ENCODE measurements at regions of chr6 and their contacts with region 1.

Region 1: DNA sequence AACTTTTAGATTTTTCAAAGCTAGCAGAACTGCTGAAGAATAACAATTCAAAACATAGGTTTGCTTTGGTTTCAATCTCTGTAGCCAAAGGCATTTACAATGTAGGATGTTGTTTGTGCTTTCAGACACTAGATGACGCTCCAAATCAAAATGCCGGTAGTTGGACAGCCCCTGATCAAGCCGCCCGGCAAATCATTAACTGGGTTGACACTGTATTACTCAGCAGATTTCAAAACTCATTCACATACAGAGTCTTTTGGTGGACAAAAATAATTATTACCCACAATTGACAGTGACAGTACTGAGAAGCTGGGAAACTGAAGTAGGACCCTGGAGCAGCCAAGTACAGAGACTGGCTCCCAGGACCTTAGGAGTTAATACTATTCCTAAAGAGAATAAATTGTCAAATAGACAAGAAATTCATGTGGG is 21.3 kb upstream of the HFE start:
- DNase-seq: peak; percentile 72
- H3K4me3 ChIP-seq: no peak overlapping the region
- H3K27ac ChIP-seq: no peak overlapping the region
- H3K4me1 ChIP-seq: no peaks in the 10 kb centered on the region
- H3K27me3 ChIP-seq: no peaks in the 10 kb centered on the region
- CTCF ChIP-seq: peak; percentile 88 to 91

Region 2: DNA sequence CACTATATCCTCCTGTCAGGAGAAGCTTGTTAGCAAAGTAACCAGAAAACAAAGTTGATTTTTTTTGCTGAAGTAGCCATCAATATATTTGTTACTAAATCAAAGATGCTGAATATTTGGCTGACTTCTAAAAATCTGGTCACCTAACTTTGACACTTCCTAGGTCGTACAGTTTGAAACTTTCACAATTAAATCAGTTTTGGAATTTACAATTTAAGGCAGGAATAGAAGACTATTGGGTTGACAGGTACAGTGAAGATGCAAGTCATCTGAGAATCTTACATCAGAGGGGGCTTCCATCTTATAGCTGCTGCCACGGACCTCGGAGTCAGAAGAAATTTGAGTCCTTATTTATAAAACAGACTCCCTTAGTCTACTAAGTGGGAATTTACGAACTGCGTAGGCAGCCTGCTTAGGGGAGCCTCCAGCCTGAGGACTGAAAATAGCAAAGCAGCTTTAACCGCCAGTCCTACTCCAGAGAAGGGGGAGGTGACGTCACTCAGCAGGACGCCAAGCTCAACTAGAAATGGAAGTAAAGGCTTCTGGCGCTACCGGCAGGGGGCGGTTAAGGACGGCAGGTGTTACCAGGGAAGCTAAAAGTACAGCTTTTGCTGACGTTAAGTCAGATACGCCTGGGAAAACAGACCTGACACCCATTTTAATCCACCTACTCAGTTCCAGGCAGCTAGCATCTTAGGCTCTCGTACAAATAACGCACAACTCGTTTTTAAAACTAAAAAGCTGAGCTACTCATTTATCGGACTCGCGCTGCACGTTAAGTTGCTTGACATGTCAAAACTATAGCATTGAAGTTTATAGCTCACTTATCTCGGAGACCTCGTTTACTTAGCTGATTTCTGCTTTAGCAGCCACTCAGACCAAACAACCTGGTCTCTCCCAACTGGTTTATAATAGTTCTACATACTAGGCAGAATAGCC is 39.8 kb before region 1 on chr6:
- CTCF ChIA-PET with region 1: no interaction called
- dilution Hi-C with region 1: no loop called
- in situ Hi-C with region 1: no loop called
- intact Hi-C with region 1: no loop called
- DNase-seq: peak; percentile 92
- H3K4me3 ChIP-seq: peak overlapping the region; percentile 41 to 60 (median 59)
- H3K27ac ChIP-seq: peak overlapping the region; percentile 89
- H3K4me1 ChIP-seq: peaks cover 30% of the 10 kb centered on the region
- H3K27me3 ChIP-seq: no peaks in the 10 kb centered on the region
- CTCF ChIP-seq: peak; percentile 91 to 95

Region 3: GRCh38 chr6:26087284-26088115 is 21.5 kb after region 1 on chr6 and contains the start of gene HFE:
- CTCF ChIA-PET with region 1: no interaction called
- dilution Hi-C with region 1: no loop called
- in situ Hi-C with region 1: no loop called
- intact Hi-C with region 1: loop called (anchors 2 kb)
- DNase-seq: peak; percentile 51
- H3K4me3 ChIP-seq: peak within 1 kb of the TSS; percentile 62 to 69 (median 62)
- H3K27ac ChIP-seq: peak within 1 kb of the TSS; percentile 73
- H3K4me1 ChIP-seq: peaks cover 8% of the 10 kb centered on the region
- H3K27me3 ChIP-seq: no peaks in the 10 kb centered on the region
- CTCF ChIP-seq: peak in 1 of 2 donors; percentile 19
- total RNA-seq, gene HFE: 9.0 to 9.5 TPM

Region 4: DNA sequence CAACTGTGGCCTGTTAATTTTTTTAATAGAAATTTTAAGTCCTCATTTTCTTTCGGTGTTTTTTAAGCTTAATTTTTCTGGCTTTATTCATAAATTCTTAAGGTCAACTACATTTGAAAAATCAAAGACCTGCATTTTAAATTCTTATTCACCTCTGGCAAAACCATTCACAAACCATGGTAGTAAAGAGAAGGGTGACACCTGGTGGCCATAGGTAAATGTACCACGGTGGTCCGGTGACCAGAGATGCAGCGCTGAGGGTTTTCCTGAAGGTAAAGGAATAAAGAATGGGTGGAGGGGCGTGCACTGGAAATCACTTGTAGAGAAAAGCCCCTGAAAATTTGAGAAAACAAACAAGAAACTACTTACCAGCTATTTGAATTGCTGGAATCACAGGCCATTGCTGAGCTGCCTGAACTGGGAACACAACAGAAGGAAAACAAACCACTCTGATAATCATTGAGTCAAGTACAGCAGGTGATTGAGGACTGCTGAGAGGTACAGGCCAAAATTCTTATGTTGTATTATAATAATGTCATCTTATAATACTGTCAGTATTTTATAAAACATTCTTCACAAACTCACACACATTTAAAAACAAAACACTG is 31.4 kb after region 1 on chr6:
- CTCF ChIA-PET with region 1: no interaction called
- dilution Hi-C with region 1: no loop called
- in situ Hi-C with region 1: no loop called
- intact Hi-C with region 1: loop called (anchors 1 kb)
- DNase-seq: peak; percentile 34
- H3K4me3 ChIP-seq: no peak overlapping the region
- H3K27ac ChIP-seq: no peak overlapping the region
- H3K4me1 ChIP-seq: no peaks in the 10 kb centered on the region
- H3K27me3 ChIP-seq: no peaks in the 10 kb centered on the region
- CTCF ChIP-seq: peak; percentile 58 to 72

Region 5: DNA sequence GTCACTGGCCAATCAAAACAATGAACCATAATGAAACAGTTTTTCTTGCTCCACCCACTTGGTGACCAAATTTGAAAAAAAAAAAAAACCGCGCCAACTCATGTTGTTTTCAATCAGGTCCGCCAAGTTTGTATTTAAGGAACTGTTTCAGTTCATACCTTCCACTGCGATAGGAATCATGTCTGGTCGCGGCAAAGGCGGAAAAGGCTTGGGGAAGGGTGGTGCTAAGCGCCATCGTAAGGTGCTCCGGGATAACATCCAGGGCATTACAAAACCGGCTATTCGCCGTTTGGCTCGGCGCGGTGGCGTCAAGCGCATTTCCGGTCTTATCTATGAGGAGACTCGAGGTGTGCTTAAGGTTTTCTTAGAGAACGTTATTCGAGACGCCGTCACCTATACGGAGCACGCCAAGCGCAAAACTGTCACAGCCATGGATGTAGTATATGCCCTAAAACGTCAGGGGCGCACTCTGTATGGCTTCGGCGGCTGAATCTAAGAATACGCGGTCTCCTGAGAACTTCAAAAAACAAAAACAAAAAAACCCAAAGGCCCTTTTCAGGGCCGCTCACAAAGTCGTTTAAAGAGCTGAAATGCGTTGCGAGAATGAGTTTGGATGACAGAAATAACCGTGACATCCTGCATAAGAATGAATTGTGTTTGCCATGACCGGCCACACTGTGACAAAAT is 37.9 kb after region 1 on chr6:
- CTCF ChIA-PET with region 1: no interaction called
- dilution Hi-C with region 1: loop called (anchors 5 kb)
- in situ Hi-C with region 1: no loop called
- intact Hi-C with region 1: no loop called
- DNase-seq: peak; percentile 95
- H3K4me3 ChIP-seq: peak overlapping the region; percentile 45 to 47 (median 47)
- H3K27ac ChIP-seq: peak overlapping the region; percentile 93
- H3K4me1 ChIP-seq: peaks cover 8% of the 10 kb centered on the region
- H3K27me3 ChIP-seq: no peaks in the 10 kb centered on the region
- CTCF ChIP-seq: peak; percentile 33 to 45

Region 6: DNA sequence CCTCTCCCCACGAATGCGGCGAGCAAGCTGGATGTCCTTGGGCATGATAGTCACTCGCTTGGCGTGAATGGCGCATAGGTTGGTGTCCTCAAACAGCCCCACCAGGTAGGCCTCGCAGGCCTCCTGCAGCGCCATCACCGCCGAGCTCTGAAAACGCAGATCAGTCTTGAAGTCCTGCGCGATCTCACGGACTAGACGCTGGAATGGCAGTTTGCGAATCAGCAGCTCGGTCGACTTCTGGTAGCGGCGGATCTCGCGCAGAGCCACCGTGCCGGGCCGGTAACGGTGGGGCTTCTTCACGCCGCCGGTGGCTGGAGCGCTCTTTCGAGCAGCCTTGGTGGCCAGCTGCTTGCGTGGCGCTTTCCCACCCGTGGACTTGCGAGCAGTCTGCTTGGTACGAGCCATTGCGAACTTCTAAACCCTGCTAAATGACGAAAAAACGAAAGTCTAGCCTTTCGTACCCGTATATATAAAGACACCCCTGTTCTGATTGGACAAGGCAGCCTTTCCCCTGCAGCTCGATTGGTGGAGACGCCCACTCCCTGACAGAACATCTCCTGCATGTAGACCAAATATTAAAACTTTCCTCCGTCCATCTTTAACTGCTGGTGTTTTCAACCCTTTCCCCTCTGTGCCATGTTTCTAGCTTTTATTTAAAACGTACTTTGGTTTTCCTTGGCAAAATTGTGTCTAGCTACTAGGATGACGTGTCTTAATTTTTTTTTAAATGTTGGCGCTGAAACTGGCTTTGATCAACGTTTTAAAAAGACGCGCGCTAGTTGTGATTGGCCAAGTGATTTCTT is 131.1 kb after region 1 on chr6:
- CTCF ChIA-PET with region 1: no interaction called
- dilution Hi-C with region 1: loop called (anchors 5 kb)
- in situ Hi-C with region 1: no loop called
- intact Hi-C with region 1: no loop called
- DNase-seq: peak; percentile 89
- H3K4me3 ChIP-seq: peak overlapping the region; percentile 69 to 90 (median 87)
- H3K27ac ChIP-seq: peak overlapping the region; percentile 87
- H3K4me1 ChIP-seq: peaks cover 8% of the 10 kb centered on the region
- H3K27me3 ChIP-seq: no peaks in the 10 kb centered on the region
- CTCF ChIP-seq: no peak

Measured in mammary epithelial cell (primary cell).